ENCODE measurements at regions of chr14 and their contacts with region 1.

Region 1: GRCh38 chr14:29299372-29299771 is 532.8 kb downstream of the FOXG1 start:
- DNase-seq: no peak
- ATAC-seq: no peak
- H3K4me3 ChIP-seq: no peak overlapping the region
- H3K27ac ChIP-seq: no peak overlapping the region
- H3K4me1 ChIP-seq: no peaks in the 10 kb centered on the region
- H3K27me3 ChIP-seq: no peaks in the 10 kb centered on the region
- CTCF ChIP-seq: no peak

Region 2: DNA sequence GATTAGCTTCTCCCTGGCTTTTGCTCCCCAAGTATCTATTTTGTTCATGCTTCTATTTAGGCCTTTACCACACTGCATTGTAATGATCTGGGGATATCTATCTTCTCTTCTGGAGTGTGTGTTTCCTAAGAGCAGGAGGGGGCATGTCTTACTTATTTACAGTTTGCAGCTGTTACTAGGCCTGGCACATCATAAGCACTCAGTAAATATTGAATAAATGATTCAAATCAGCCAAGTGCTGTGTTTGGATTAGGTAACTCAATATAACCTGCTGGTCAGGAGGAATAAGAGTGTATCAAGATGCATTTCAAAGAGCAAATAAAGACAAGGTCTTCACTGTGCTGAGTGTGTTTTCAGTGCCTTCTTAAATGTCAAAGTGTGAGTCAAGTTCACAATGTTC is 346.7 kb before region 1 on chr14:
- intact Hi-C with region 1: loop called in 1 of 2 experiments (anchors 5 kb)
- DNase-seq: no peak
- ATAC-seq: no peak
- H3K4me3 ChIP-seq: no peak overlapping the region
- H3K27ac ChIP-seq: no peak overlapping the region
- H3K4me1 ChIP-seq: no peaks in the 10 kb centered on the region
- H3K27me3 ChIP-seq: no peaks in the 10 kb centered on the region
- CTCF ChIP-seq: no peak

Measured in psoas muscle (tissue), 8 donors.